ENCODE measurements at regions of chr4 and their contacts with region 1.

Region 1: GRCh38 chr4:158630893-158631292 is 40.8 kb downstream of the C4orf46 start:
- DNase-seq: no peak

Region 2: GRCh38 chr4:157992038-157992705 is 638.7 kb before region 1 on chr4:
- intact Hi-C with region 1: loop called (anchors 10 kb)
- DNase-seq: no peak

Measured in cardiac septum (tissue), 1 donor.